Caco-2 (cell line): ENCODE measurements at regions of chr2 and their contacts with region 1.

Region 1: DNA sequence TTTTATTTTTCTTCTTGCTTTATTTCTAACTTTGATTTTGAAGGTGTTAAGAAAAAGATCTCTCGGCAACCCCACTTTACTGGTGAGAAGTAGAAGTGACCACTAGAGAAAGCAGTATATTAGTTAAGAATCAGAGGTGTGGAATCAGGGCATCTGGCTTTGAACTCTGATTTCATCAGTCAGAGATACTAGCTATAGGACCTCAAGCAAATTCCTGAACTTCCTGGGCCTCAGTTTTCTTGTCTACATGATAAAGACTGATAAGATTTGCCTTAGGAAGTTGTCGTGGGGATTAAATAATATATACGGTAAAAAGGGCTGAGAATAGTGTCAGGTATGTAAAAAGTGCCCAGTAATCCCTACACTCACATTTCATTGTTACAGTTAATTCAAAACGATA is 440.3 kb upstream of the CRIM1 start:
- DNase-seq: no peak
- H3K4me3 ChIP-seq: no peak overlapping the region
- H3K4me3 Mint-ChIP-seq: no peak overlapping the region
- H3K27ac Mint-ChIP-seq: no peak overlapping the region
- H3K4me1 ChIP-seq: no peaks in the 10 kb centered on the region
- H3K4me1 Mint-ChIP-seq: no peaks in the 10 kb centered on the region
- H3K27me3 ChIP-seq: no peaks in the 10 kb centered on the region
- H3K27me3 Mint-ChIP-seq: peaks cover 17% of the 10 kb centered on the region
- CTCF ChIP-seq: no peak

Region 2: GRCh38 chr2:34201099-34201498 is 1714.2 kb before region 1 on chr2:
- CTCF ChIA-PET with region 1: no interaction called
- POLR2A ChIA-PET with region 1: no interaction called
- intact Hi-C with region 1: no loop called
- DNase-seq: no peak
- H3K4me3 ChIP-seq: no peak overlapping the region
- H3K4me3 Mint-ChIP-seq: no peak overlapping the region
- H3K27ac Mint-ChIP-seq: no peak overlapping the region
- H3K4me1 ChIP-seq: no peaks in the 10 kb centered on the region
- H3K4me1 Mint-ChIP-seq: no peaks in the 10 kb centered on the region
- H3K27me3 ChIP-seq: no peaks in the 10 kb centered on the region
- H3K27me3 Mint-ChIP-seq: peaks cover 2% of the 10 kb centered on the region
- CTCF ChIP-seq: no peak

Region 3: GRCh38 chr2:35946478-35946877 is 31.2 kb after region 1 on chr2:
- CTCF ChIA-PET with region 1: no interaction called
- POLR2A ChIA-PET with region 1: no interaction called
- intact Hi-C with region 1: loop called (anchors 1 kb)
- DNase-seq: peak in 1 of 2 experiments; percentile 8
- H3K4me3 ChIP-seq: no peak overlapping the region
- H3K4me3 Mint-ChIP-seq: no peak overlapping the region
- H3K27ac Mint-ChIP-seq: no peak overlapping the region
- H3K4me1 ChIP-seq: no peaks in the 10 kb centered on the region
- H3K4me1 Mint-ChIP-seq: peaks cover 6% of the 10 kb centered on the region
- H3K27me3 ChIP-seq: no peaks in the 10 kb centered on the region
- H3K27me3 Mint-ChIP-seq: peaks cover 4% of the 10 kb centered on the region
- CTCF ChIP-seq: no peak